GM12878 (cell line): ENCODE measurements at regions of chr10 and their contacts with region 1.

Region 1: GRCh38 chr10:72337020-72337629 is 17.6 kb downstream of the DNAJB12 start:
- DNase-seq: no peak
- ATAC-seq: peak; percentile 11; the same call in 1 of the 3 replicates
- H3K4me3 ChIP-seq: no peak overlapping the region
- H3K27ac ChIP-seq: peak overlapping the region; percentile 1; the same call in 1 of the 2 replicates
- H3K4me1 ChIP-seq: peaks cover 61% of the 10 kb centered on the region
- H3K27me3 ChIP-seq: no peaks in the 10 kb centered on the region
- CTCF ChIP-seq: peak; percentile 95 to 98 (median 96)
- EP300 ChIP-seq: no peak
- POLR2A ChIP-seq: peak; percentile 18; the same call in 1 of the 2 replicates
- RAD21 ChIP-seq: peak; percentile 91

Region 2: GRCh38 chr10:70518695-70519094 is 1818.4 kb before region 1 on chr10:
- CTCF ChIA-PET with region 1: no interaction called
- POLR2A ChIA-PET with region 1: no interaction called
- RAD21 ChIA-PET with region 1: no interaction called
- SMC1A ChIA-PET with region 1: no interaction called
- in situ Hi-C with region 1: no loop called
- intact Hi-C with region 1: no loop called
- DNase-seq: no peak
- ATAC-seq: no peak
- H3K4me3 ChIP-seq: no peak overlapping the region
- H3K27ac ChIP-seq: no peak overlapping the region
- H3K4me1 ChIP-seq: peaks cover 9% of the 10 kb centered on the region
- H3K27me3 ChIP-seq: no peaks in the 10 kb centered on the region
- CTCF ChIP-seq: no peak
- EP300 ChIP-seq: no peak
- POLR2A ChIP-seq: no peak
- RAD21 ChIP-seq: no peak

Region 3: GRCh38 chr10:71957546-71958275 is 379.4 kb before region 1 on chr10:
- CTCF ChIA-PET with region 1: interaction called, 6 read pairs
- POLR2A ChIA-PET with region 1: no interaction called
- RAD21 ChIA-PET with region 1: no interaction called
- SMC1A ChIA-PET with region 1: interaction called, 5 read pairs
- in situ Hi-C with region 1: no loop called
- intact Hi-C with region 1: loop called (anchors 2 kb)
- DNase-seq: no peak
- ATAC-seq: no peak
- H3K4me3 ChIP-seq: no peak overlapping the region
- H3K27ac ChIP-seq: no peak overlapping the region
- H3K4me1 ChIP-seq: no peaks in the 10 kb centered on the region
- H3K27me3 ChIP-seq: peaks cover 0 to 3% of the 10 kb centered on the region in 2 experiments; a peak in 1 of 4 replicates
- CTCF ChIP-seq: no peak
- EP300 ChIP-seq: no peak
- POLR2A ChIP-seq: no peak
- RAD21 ChIP-seq: no peak

Region 4: GRCh38 chr10:72173635-72174296 is 163.4 kb before region 1 on chr10:
- CTCF ChIA-PET with region 1: interaction called, 12 read pairs
- POLR2A ChIA-PET with region 1: no interaction called
- RAD21 ChIA-PET with region 1: interaction called, 8 read pairs
- SMC1A ChIA-PET with region 1: interaction called, 3 read pairs
- in situ Hi-C with region 1: no loop called
- intact Hi-C with region 1: no loop called
- DNase-seq: peak; percentile 86
- ATAC-seq: peak; percentile 91
- H3K4me3 ChIP-seq: no peak overlapping the region; the same call in 1 of the 2 replicates
- H3K27ac ChIP-seq: peak overlapping the region; percentile 67
- H3K4me1 ChIP-seq: peaks cover 35% of the 10 kb centered on the region
- H3K27me3 ChIP-seq: no peaks in the 10 kb centered on the region
- CTCF ChIP-seq: no peak
- EP300 ChIP-seq: no peak
- POLR2A ChIP-seq: no peak
- RAD21 ChIP-seq: no peak

Region 5: GRCh38 chr10:72248468-72249151 is 88.5 kb before region 1 on chr10:
- CTCF ChIA-PET with region 1: interaction called, 17 read pairs
- POLR2A ChIA-PET with region 1: interaction called, 44 read pairs
- RAD21 ChIA-PET with region 1: interaction called, 170 read pairs
- SMC1A ChIA-PET with region 1: interaction called, 41 read pairs
- in situ Hi-C with region 1: no loop called
- intact Hi-C with region 1: loop called (anchors 1 kb)
- DNase-seq: peak; percentile 99
- ATAC-seq: peak; percentile 95
- H3K4me3 ChIP-seq: peak overlapping the region; percentile 55; the same call in 1 of the 2 replicates
- H3K27ac ChIP-seq: peak overlapping the region; percentile 97
- H3K4me1 ChIP-seq: peaks cover 72% of the 10 kb centered on the region
- H3K27me3 ChIP-seq: no peaks in the 10 kb centered on the region
- CTCF ChIP-seq: no peak
- EP300 ChIP-seq: peak; percentile 88 to 91
- POLR2A ChIP-seq: peak; percentile 89
- RAD21 ChIP-seq: no peak

Region 6: GRCh38 chr10:72254813-72255568 is 82.1 kb before region 1 on chr10:
- CTCF ChIA-PET with region 1: interaction called, 57 read pairs
- POLR2A ChIA-PET with region 1: interaction called, 48 read pairs
- RAD21 ChIA-PET with region 1: interaction called, 170 read pairs
- SMC1A ChIA-PET with region 1: interaction called, 56 read pairs
- in situ Hi-C with region 1: no loop called
- intact Hi-C with region 1: no loop called
- DNase-seq: no peak
- ATAC-seq: peak; percentile 73
- H3K4me3 ChIP-seq: peak overlapping the region; percentile 10; the same call in 1 of the 2 replicates
- H3K27ac ChIP-seq: peak overlapping the region; percentile 90
- H3K4me1 ChIP-seq: peaks cover 72% of the 10 kb centered on the region
- H3K27me3 ChIP-seq: no peaks in the 10 kb centered on the region
- CTCF ChIP-seq: peak in 1 of 3 experiments; percentile 33; a peak in 2 of 6 replicates
- EP300 ChIP-seq: no peak
- POLR2A ChIP-seq: peak; percentile 69
- RAD21 ChIP-seq: peak; percentile 40

Region 7: GRCh38 chr10:72348282-72348681 is 11.2 kb after region 1 on chr10:
- CTCF ChIA-PET with region 1: interaction called, 15 read pairs
- POLR2A ChIA-PET with region 1: interaction called, 4 read pairs
- RAD21 ChIA-PET with region 1: interaction called, 4 read pairs
- SMC1A ChIA-PET with region 1: interaction called, 4 read pairs
- in situ Hi-C with region 1: no loop called
- intact Hi-C with region 1: no loop called
- DNase-seq: no peak
- ATAC-seq: no peak
- H3K4me3 ChIP-seq: no peak overlapping the region
- H3K27ac ChIP-seq: no peak overlapping the region
- H3K4me1 ChIP-seq: peaks cover 11% of the 10 kb centered on the region
- H3K27me3 ChIP-seq: no peaks in the 10 kb centered on the region
- CTCF ChIP-seq: no peak
- EP300 ChIP-seq: no peak
- POLR2A ChIP-seq: no peak
- RAD21 ChIP-seq: no peak

Region 8: DNA sequence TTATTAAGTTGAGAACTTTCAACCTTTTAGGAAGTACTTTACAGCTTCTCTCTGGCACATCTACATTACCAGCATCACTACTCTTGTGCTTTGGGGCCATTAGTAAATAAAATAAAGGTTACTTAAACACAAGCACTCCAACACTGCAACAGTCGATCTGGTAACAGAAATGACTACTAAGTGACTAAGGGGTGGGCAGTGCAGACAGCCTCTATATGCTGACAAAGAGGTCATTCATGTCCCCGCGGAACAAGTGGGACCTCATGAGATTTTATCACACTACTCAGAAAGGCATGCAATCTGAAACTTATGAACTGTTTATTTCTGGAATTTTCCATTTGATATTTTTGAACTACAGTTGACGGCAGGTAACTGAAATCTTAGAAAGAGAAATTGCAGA is 128.9 kb after region 1 on chr10:
- CTCF ChIA-PET with region 1: no interaction called
- POLR2A ChIA-PET with region 1: no interaction called
- RAD21 ChIA-PET with region 1: no interaction called
- SMC1A ChIA-PET with region 1: no interaction called
- in situ Hi-C with region 1: no loop called
- intact Hi-C with region 1: no loop called
- DNase-seq: no peak
- ATAC-seq: no peak
- H3K4me3 ChIP-seq: no peak overlapping the region
- H3K27ac ChIP-seq: no peak overlapping the region
- H3K4me1 ChIP-seq: no peaks in the 10 kb centered on the region
- H3K27me3 ChIP-seq: no peaks in the 10 kb centered on the region
- CTCF ChIP-seq: no peak
- EP300 ChIP-seq: no peak
- POLR2A ChIP-seq: no peak
- RAD21 ChIP-seq: no peak